Psoas muscle (tissue), 8 donors: ENCODE measurements at regions of chr19 and their contacts with region 1.

Region 1: GRCh38 chr19:55526216-55527196 is 10.4 kb downstream of the SBK2 start:
- DNase-seq: peak; percentile 78 to 93
- ATAC-seq: peak; percentile 74 to 81 (median 78)
- H3K4me3 ChIP-seq: no peak overlapping the region
- H3K27ac ChIP-seq: peak overlapping the region; percentile 68
- H3K4me1 ChIP-seq: peaks cover 14% of the 10 kb centered on the region
- H3K27me3 ChIP-seq: no peaks in the 10 kb centered on the region
- CTCF ChIP-seq: no peak

Region 2: DNA sequence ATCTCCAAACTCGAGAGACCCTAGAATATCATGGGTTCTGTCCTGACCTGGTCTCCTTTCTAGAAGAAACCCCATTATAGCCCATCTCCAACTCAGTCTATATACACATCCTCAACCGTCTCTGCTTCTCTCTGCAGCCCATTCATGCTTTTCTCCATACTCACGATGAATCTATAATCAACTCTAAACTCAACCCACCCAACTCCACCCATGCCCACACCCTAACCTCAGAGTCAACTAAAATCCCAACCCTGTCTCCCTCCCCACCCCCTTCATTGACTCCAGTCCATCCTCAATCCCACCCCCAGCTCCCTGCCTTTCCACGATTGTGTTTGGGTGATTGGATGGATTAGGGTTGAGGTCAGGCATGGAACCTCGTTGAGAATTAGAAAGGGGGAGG is 17.1 kb after region 1 on chr19:
- intact Hi-C with region 1: loop called in 1 of 2 experiments (anchors 2 kb)
- DNase-seq: no peak
- ATAC-seq: no peak
- H3K4me3 ChIP-seq: no peak overlapping the region
- H3K27ac ChIP-seq: no peak overlapping the region
- H3K4me1 ChIP-seq: peaks cover 30% of the 10 kb centered on the region
- H3K27me3 ChIP-seq: no peaks in the 10 kb centered on the region
- CTCF ChIP-seq: no peak

Region 3: GRCh38 chr19:55980415-55980814 is 453.9 kb after region 1 on chr19:
- intact Hi-C with region 1: no loop called
- DNase-seq: no peak
- ATAC-seq: no peak
- H3K4me3 ChIP-seq: no peak overlapping the region
- H3K27ac ChIP-seq: no peak overlapping the region
- H3K4me1 ChIP-seq: no peaks in the 10 kb centered on the region
- H3K27me3 ChIP-seq: no peaks in the 10 kb centered on the region
- CTCF ChIP-seq: no peak